ENCODE measurements at regions of chr4 and their contacts with region 1.

Region 1: DNA sequence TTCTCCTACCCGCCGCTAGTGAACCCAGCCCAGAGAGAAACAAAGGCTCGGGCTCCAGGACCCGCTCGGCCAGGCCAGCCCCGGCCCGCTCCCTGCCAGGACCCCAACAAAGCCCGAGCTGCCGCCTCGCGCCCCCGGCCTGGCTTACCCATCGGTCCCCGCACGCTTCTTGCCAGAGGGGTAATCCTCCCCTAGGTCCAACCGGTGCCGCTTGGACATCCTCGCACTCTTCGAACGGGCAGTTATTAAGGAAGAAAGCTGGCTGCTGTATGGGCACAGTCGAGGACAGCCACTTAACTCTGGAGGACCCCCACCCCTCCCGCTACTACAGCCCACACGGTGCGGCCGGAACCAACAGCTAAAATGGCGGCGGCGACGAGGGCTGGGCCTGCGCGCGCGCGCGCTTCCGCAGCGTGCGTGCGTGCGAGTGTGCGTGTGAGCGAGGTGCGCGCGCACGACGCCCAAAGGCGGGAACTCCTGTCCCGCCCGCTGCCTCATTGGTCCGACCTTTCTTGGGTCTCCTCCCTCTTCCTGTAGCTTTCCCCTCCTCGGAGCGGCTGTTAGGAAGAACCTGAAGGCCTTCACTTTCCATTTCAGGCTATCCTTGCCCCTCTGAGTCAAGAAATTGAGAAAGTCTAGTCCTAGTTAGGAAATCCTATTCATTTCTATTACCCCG is at the start of gene DHX15:
- DNase-seq: peak; percentile 85 to 98
- H3K4me3 ChIP-seq: peak within 1 kb of the TSS; percentile 94 to 98
- H3K27ac ChIP-seq: peak within 1 kb of the TSS; percentile 97 to 98
- H3K4me1 ChIP-seq: peaks cover 5 to 16% of the 10 kb centered on the region in 2 donors
- H3K27me3 ChIP-seq: no peaks in the 10 kb centered on the region
- CTCF ChIP-seq: no peak
- total RNA-seq, gene DHX15: 46.6 TPM

Region 2: DNA sequence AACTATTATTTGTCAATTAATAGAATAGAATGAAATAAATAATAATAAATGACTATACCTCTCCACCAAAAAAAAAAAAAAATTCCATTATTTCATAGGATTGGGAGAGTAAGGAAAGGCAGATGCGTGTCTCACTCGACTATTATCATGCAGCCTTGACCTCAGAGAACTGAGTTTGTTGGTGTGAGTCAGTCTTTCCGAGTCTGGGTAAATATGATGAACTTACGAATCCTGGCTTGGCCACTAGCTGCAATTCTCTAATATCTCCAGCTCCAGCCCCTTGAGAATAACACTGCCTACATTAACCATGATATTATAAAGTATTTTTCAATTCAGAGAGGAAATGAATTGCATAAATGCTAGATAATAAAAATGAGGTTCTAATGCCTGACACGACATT is 46.6 kb after region 1 on chr4:
- intact Hi-C with region 1: no loop called
- DNase-seq: no peak
- H3K4me3 ChIP-seq: no peak overlapping the region
- H3K27ac ChIP-seq: no peak overlapping the region
- H3K4me1 ChIP-seq: no peaks in the 10 kb centered on the region
- H3K27me3 ChIP-seq: no peaks in the 10 kb centered on the region
- CTCF ChIP-seq: no peak

Region 3: DNA sequence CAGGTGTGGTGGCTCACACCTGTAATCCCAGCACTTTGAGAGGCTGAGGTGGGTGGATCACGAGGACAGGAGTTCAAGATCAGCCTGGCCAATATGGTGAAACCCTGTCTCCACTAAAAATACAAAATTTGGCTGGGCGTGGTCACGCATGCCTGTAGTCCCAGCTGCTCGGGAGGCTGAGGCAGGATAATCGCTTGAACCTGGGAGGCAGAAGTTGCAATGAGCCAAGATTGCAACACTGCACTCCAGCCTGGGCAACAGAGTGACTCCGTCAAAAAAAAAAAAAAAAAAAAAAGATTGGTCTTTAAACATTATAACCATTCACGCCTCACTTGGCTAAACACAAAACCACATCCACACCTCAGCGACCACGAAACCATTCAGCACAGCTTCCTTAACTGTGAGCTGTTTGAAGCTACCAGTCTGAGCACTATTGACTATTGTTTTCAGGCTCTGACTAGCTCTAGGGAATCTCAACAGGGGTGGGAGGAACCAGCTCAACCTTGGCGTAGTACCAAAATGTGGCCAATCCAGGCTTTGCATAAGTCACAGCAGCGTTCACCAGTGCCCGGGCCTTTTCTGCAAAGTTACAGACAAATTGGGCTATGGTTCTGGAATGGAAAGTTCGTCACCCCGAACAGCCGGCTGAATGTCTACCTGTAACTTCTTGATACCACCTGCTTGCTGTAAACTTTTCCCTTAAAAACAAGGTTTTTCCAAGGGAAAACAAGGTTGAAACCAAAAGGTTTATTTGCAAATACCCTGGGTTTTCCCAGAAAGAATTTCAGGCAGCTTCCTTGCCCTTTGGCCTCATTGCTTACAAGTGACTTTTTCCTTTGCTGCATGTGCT is 73.7 kb after region 1 on chr4:
- intact Hi-C with region 1: loop called (anchors 10 kb)
- DNase-seq: no peak
- H3K4me3 ChIP-seq: no peak overlapping the region
- H3K27ac ChIP-seq: no peak overlapping the region
- H3K4me1 ChIP-seq: no peaks in the 10 kb centered on the region
- H3K27me3 ChIP-seq: no peaks in the 10 kb centered on the region
- CTCF ChIP-seq: no peak

Region 4: GRCh38 chr4:24778464-24779225 is 194.3 kb after region 1 on chr4:
- intact Hi-C with region 1: loop called (anchors 2 kb)
- DNase-seq: peak in 1 of 2 donors; percentile 92
- H3K4me3 ChIP-seq: no peak overlapping the region
- H3K27ac ChIP-seq: peak overlapping the region; percentile 77 to 88
- H3K4me1 ChIP-seq: peaks cover 9 to 53% of the 10 kb centered on the region in 2 donors
- H3K27me3 ChIP-seq: no peaks in the 10 kb centered on the region
- CTCF ChIP-seq: no peak

Region 5: DNA sequence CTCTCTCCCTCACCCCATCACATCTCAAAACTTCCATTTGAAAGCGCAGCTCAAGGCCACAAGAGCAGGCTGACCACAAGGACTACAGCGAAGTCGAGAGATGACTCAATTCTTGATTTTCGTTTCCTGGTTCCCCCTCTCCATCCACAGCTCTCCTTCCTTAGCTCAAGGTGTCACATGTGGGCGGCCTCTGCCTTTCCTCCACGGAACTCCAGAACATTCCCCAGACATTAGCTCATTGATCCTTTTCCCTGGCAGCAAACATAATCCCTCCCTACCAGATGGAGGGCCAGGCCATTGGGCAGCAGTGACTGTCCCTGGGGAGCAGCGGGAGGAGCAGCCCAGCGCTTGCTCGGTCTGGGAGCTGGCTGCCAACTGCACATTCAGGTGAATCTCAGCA is 272.3 kb after region 1 on chr4:
- intact Hi-C with region 1: loop called (anchors 5 kb)
- DNase-seq: peak in 1 of 2 donors; percentile 90
- H3K4me3 ChIP-seq: no peak overlapping the region
- H3K27ac ChIP-seq: peak overlapping the region; percentile 72 to 73
- H3K4me1 ChIP-seq: peaks cover 14 to 47% of the 10 kb centered on the region in 2 donors
- H3K27me3 ChIP-seq: no peaks in the 10 kb centered on the region
- CTCF ChIP-seq: no peak

Region 6: GRCh38 chr4:24980064-24980690 is 395.9 kb after region 1 on chr4:
- intact Hi-C with region 1: loop called (anchors 10 kb)
- DNase-seq: peak in 1 of 2 donors; percentile 75
- H3K4me3 ChIP-seq: peak overlapping the region; percentile 21 to 26
- H3K27ac ChIP-seq: peak overlapping the region; percentile 40 to 61
- H3K4me1 ChIP-seq: peaks cover 0 to 6% of the 10 kb centered on the region in 2 donors
- H3K27me3 ChIP-seq: no peaks in the 10 kb centered on the region
- CTCF ChIP-seq: peak; percentile 71 to 87 (median 80)

Region 7: DNA sequence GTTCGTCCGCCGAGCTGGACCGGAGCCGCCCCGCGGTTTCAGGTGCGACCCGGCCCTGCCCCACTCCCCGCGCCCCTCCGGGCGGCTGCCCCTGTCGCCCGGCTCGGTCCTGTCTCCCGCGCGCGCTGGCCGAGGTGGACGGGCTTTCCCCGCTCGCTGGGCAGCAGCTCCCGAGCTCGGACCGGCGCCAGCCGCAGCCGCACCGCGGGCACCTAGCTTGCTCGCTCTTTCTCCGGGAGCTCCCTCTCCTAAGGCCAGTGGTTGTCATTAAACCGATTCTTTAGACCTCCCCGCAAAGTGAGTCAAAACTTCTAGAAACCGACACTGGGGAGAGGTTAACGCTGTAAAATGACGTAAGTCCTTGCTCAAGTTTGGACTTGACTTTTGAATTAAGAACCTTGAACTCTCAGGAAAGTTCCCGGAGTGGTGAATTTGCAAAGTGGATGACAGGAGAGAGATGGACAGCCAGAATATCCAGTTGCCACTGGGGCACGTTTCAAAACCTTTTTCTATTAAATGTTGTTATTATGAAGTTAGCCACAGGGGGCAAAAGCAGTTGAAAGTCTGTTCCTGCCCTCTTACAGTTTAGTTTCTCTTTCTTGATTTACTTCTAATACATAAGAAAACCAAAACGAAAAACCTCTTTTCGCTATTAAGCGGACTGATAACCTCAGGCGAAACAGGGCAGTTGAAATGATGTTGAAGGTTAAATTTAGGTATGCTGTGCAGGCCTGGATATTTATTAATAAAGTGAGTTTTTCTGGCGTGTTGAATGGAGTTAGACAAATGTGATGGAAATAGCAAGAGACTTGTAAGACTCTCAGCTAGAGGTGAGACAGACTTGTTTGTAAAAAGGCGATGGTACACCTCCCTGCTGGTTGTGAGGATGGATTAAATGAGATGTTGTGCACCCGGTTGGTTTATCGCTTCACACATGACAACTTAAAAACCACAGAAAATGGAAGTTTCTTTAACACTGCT is 650.4 kb after region 1 on chr4:
- intact Hi-C with region 1: loop called (anchors 1 kb)
- DNase-seq: peak in 1 of 2 donors; percentile 70
- H3K4me3 ChIP-seq: peak overlapping the region; percentile 81 to 100
- H3K27ac ChIP-seq: peak overlapping the region; percentile 96 to 99
- H3K4me1 ChIP-seq: peaks cover 0 to 8% of the 10 kb centered on the region in 2 donors
- H3K27me3 ChIP-seq: no peaks in the 10 kb centered on the region
- CTCF ChIP-seq: peak in 2 of 3 experiments; percentile 54 to 55